Calu3 (cell line): ENCODE measurements at regions of chr17 and their contacts with region 1.

Region 1: DNA sequence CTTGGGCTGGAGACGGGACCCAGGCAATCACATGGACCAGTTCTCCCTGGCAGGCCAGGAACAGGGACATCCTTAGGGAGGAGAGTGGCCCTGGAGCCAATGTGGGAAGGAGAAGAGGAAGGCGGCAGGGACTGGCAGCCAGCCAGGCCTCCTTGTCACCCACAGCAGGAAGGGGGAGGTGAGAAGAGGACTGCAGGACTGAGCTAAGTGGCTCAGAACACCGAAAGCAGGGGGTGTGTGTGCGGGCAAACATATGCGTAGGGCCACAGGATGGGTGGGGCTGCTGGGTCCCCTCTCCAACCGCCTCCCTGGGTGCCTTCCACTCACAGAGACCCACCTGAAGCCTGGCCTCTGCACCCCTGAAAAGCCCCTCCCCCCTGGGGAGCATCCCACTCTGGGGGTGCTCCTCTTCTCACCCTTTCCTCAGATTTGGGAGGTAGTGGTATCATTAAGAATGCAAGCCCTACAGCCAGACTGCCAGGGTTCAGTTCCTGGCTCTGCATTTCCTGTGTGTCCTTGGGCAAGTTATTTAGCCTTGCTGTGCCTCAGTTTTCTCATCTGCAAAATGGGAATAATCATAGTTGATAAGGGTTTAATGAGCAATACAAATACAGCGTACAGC is 8.1 kb downstream of the PNMT start:
- DNase-seq: peak; percentile 100
- H3K4me3 Mint-ChIP-seq: peak overlapping the region; percentile 3
- H3K27ac Mint-ChIP-seq: peak overlapping the region; percentile 62
- H3K4me1 Mint-ChIP-seq: peaks cover 91% of the 10 kb centered on the region
- H3K27me3 Mint-ChIP-seq: peaks cover 6% of the 10 kb centered on the region
- CTCF ChIP-seq: no peak

Region 2: GRCh38 chr17:39699818-39700147 is 23.5 kb after region 1 on chr17 and contains the start of gene ERBB2:
- CTCF ChIA-PET with region 1: interaction called, 34,714 read pairs
- intact Hi-C with region 1: loop called (anchors 1 kb)
- DNase-seq: peak; percentile 100
- H3K4me3 Mint-ChIP-seq: peak within 1 kb of the TSS; percentile 71
- H3K27ac Mint-ChIP-seq: peak within 1 kb of the TSS; percentile 67
- H3K4me1 Mint-ChIP-seq: peaks cover 68% of the 10 kb centered on the region
- H3K27me3 Mint-ChIP-seq: no peaks in the 10 kb centered on the region
- CTCF ChIP-seq: no peak
- total RNA-seq, gene ERBB2: 4,829 and 4,830 TPM in 2 replicates

Region 3: GRCh38 chr17:39717660-39718059 is 41.4 kb after region 1 on chr17:
- CTCF ChIA-PET with region 1: interaction called, 34,714 read pairs
- intact Hi-C with region 1: loop called (anchors 1 kb)
- DNase-seq: no peak
- H3K4me3 Mint-ChIP-seq: no peak overlapping the region
- H3K27ac Mint-ChIP-seq: peak overlapping the region; percentile 2
- H3K4me1 Mint-ChIP-seq: peaks cover 21% of the 10 kb centered on the region
- H3K27me3 Mint-ChIP-seq: no peaks in the 10 kb centered on the region
- CTCF ChIP-seq: no peak